H1 (cell line): ENCODE measurements at regions of chr2 and their contacts with region 1.

Region 1: GRCh38 chr2:121076885-121077549 is 208.0 kb downstream of the TFCP2L1 start:
- DNase-seq: peak in 1 of 2 experiments; percentile 99
- H3K4me3 ChIP-seq: peak overlapping the region in 3 of 4 experiments; percentile 28 to 54 (median 36); a peak in 6 of 8 replicates
- H3K27ac ChIP-seq: no peak overlapping the region
- H3K4me1 ChIP-seq: peaks cover 0 to 19% (median 13%) of the 10 kb centered on the region in 4 experiments; a peak in 6 of 7 replicates
- H3K27me3 ChIP-seq: peaks cover 0 to 32% (median 20%) of the 10 kb centered on the region in 4 experiments; a peak in 6 of 7 replicates
- CTCF ChIP-seq: peak in 2 of 3 experiments; percentile 94 to 99; a peak in 3 of 4 replicates
- EP300 ChIP-seq: no peak
- POLR2A ChIP-seq: no peak
- RAD21 ChIP-seq: peak; percentile 52 to 61

Region 2: GRCh38 chr2:120712180-120712681 is 364.8 kb before region 1 on chr2:
- CTCF ChIA-PET with region 1: interaction called, 7 read pairs
- POLR2A ChIA-PET with region 1: interaction called, 10 read pairs
- DNase-seq: no peak
- H3K4me3 ChIP-seq: no peak overlapping the region
- H3K27ac ChIP-seq: no peak overlapping the region
- H3K4me1 ChIP-seq: peaks cover 14 to 23% (median 17%) of the 10 kb centered on the region in 4 experiments
- H3K27me3 ChIP-seq: peaks cover 0 to 19% (median 8%) of the 10 kb centered on the region in 4 experiments; a peak in 5 of 7 replicates
- CTCF ChIP-seq: no peak
- EP300 ChIP-seq: no peak
- POLR2A ChIP-seq: no peak
- RAD21 ChIP-seq: no peak

Region 3: DNA sequence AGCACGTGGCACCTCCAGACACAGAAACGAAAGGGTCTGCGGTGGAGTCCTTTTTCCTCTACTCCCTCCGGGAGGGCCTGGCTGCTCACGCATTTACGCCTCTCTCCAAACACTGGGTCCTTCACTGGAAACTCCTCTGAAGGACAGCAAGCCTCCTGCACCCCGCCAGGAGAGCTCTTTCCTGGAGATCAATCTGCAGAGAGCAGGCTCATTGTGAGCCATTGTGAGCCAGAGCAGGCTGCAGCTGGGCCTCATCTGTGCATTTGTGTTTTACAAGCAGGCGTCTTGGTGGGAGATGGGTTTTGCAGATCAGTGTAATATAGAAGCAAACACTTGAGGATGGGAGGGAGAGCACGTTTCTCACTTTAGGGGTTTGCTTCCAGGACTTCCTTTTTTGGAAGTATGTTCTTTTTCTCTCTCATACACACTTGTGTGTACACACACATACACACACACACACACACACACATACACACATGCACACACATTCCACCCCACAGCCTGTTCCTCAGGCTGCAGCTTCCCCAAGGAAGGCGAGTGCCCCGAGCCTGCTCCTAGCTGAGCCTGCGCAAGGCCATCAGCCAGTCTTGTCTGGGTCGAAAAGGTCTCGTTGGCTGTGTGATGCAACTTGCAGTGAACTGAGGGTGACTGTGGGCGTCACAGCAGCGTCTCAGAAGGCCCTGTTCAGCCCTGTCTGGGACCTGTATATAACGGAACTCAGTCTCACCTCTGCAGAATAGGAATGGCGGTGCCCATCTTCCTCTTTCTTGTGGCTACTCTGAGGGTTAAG is 177.9 kb before region 1 on chr2:
- CTCF ChIA-PET with region 1: interaction called, 4 read pairs
- POLR2A ChIA-PET with region 1: interaction called, 11 read pairs
- DNase-seq: no peak
- H3K4me3 ChIP-seq: no peak overlapping the region
- H3K27ac ChIP-seq: no peak overlapping the region; the same call in 1 of the 2 replicates
- H3K4me1 ChIP-seq: peaks cover 18 to 44% (median 28%) of the 10 kb centered on the region in 4 experiments
- H3K27me3 ChIP-seq: no peaks in the 10 kb centered on the region; a peak in 1 of 7 replicates
- CTCF ChIP-seq: no peak
- EP300 ChIP-seq: no peak
- POLR2A ChIP-seq: no peak
- RAD21 ChIP-seq: no peak

Region 4: DNA sequence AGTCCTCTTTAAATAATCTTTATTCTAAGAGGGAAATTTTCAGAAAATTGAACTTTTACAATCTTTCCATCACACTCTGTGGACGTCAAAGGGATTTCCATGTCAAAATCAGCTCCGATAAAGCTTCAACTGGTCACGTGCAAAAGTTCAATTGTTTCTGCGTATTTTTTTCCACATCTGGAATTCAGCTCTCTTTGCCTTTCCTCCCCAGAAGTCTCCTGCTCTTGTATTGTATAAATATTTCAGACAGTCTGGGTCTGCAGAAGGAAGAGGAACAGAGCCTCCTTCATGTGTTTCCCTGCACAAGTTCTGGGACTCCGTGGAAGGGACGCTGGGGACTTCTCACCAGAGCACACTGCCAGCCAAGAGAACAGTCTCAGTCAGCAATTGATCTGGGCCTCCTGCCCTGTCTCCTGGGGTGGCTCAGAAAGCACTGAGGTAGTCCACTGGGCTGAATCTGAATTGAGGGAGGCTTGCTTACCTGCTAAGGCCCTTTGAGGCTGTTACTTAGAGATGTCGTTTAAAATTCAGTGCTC is 43.5 kb before region 1 on chr2:
- CTCF ChIA-PET with region 1: interaction called, 4 read pairs
- POLR2A ChIA-PET with region 1: interaction called, 13 read pairs
- DNase-seq: no peak
- H3K4me3 ChIP-seq: no peak overlapping the region
- H3K27ac ChIP-seq: no peak overlapping the region
- H3K4me1 ChIP-seq: no peaks in the 10 kb centered on the region
- H3K27me3 ChIP-seq: peaks cover 0 to 28% (median 15%) of the 10 kb centered on the region in 4 experiments; a peak in 6 of 7 replicates
- CTCF ChIP-seq: no peak
- EP300 ChIP-seq: no peak
- POLR2A ChIP-seq: no peak
- RAD21 ChIP-seq: no peak

Region 5: DNA sequence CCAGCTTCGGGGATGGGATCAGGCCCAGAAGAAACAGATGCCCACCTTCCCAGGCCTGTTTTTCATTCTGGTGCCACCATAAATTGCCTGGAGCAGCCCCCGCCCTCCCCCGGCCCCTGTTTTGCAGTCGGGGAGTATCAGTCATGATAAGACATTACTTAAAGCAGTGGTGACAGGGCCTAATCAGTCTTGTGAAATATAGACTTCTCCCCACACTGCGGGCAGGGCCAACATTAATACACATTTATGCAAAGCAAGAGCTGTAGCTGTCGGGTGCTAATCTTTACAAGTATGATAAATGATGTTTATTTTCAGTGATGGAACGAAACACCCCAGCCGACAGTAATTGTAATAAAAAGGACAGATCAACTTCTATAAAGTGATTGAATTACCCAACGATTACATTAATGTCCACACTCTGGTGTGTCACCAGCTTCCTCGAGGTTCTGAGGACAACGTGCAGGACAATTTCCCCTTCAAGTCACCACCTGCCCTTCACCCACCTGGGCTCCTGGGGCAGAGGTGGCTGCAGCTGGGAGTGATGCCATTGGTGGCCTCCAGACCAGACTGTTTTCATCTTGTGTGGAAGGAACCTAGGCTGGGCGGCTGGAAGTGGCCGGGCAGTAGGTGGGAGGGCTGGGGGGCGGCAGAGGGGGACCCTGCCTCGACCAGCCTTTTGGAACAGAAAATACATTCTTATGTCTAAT is 18.0 kb before region 1 on chr2:
- CTCF ChIA-PET with region 1: interaction called, 10 read pairs
- POLR2A ChIA-PET with region 1: interaction called, 35 read pairs
- DNase-seq: no peak
- H3K4me3 ChIP-seq: no peak overlapping the region
- H3K27ac ChIP-seq: no peak overlapping the region
- H3K4me1 ChIP-seq: peaks cover 0 to 15% (median 4%) of the 10 kb centered on the region in 4 experiments; a peak in 6 of 7 replicates
- H3K27me3 ChIP-seq: peaks cover 0 to 17% (median 5%) of the 10 kb centered on the region in 4 experiments; a peak in 3 of 7 replicates
- CTCF ChIP-seq: no peak
- EP300 ChIP-seq: no peak
- POLR2A ChIP-seq: no peak
- RAD21 ChIP-seq: no peak

Region 6: DNA sequence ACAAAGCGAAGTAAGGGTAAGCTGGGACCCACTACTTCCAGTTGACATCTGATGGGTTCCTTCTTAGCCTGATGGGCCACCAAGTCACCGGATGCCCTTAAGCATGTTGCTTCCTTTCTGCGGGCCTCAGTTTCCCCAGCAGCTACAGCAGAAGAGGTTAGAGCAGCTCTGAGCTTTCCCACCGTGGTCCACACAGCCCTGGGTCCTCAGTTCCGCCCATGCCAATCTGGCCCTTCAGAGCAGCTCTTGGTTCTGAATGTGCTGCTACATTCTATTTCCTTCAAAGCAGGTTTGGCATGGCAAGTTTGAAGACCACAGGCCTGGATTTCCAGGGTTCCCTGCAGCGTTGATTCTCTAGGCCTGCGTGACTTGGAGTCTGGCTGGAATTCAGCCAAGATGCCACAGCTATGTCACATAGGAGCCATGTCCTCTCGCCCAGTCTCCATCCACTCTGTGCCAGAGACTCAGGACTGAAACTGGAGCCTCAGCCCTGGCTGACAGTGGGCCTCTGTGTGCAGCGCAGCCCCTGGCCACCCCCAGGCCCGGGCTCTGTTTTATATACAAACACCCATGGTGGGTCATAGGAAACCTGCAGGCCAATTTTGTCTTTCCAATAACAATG is 128.4 kb after region 1 on chr2:
- CTCF ChIA-PET with region 1: no interaction called
- POLR2A ChIA-PET with region 1: no interaction called
- DNase-seq: no peak
- H3K4me3 ChIP-seq: no peak overlapping the region
- H3K27ac ChIP-seq: no peak overlapping the region
- H3K4me1 ChIP-seq: no peaks in the 10 kb centered on the region
- H3K27me3 ChIP-seq: no peaks in the 10 kb centered on the region; a peak in 1 of 7 replicates
- CTCF ChIP-seq: no peak
- EP300 ChIP-seq: no peak
- POLR2A ChIP-seq: no peak
- RAD21 ChIP-seq: no peak

Region 7: DNA sequence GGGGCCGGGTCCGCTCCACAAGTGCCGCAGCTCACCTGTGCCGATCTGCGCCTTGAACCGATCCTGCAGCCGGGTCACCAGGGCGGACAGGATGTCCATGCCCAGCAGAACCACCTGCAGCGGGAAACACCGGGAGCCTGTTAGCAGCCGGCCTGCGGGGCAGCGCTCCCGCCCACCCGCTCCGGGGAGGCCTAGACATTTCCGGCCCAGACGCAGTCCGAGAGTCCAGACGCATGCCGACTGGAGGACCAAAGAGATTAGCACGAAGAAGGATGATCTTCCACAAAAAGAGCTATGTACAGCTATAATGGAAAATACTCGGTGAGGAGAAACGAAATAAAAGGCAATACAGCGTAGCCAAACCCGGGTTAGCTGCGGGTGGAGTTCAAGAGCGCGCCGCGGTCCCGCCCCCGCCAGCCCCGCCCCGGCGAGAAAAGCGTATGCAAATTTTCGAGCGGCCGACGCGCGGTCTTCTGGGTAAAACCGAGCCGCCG is 453.2 kb after region 1 on chr2:
- CTCF ChIA-PET with region 1: interaction called, 5 read pairs
- POLR2A ChIA-PET with region 1: interaction called, 15 read pairs
- DNase-seq: peak; percentile 47 to 88
- H3K4me3 ChIP-seq: peak overlapping the region; percentile 86 to 95 (median 92)
- H3K27ac ChIP-seq: peak overlapping the region; percentile 99
- H3K4me1 ChIP-seq: peaks cover 0 to 11% (median 5%) of the 10 kb centered on the region in 4 experiments; a peak in 3 of 7 replicates
- H3K27me3 ChIP-seq: no peaks in the 10 kb centered on the region
- CTCF ChIP-seq: no peak
- EP300 ChIP-seq: no peak
- POLR2A ChIP-seq: no peak
- RAD21 ChIP-seq: no peak

Region 8: DNA sequence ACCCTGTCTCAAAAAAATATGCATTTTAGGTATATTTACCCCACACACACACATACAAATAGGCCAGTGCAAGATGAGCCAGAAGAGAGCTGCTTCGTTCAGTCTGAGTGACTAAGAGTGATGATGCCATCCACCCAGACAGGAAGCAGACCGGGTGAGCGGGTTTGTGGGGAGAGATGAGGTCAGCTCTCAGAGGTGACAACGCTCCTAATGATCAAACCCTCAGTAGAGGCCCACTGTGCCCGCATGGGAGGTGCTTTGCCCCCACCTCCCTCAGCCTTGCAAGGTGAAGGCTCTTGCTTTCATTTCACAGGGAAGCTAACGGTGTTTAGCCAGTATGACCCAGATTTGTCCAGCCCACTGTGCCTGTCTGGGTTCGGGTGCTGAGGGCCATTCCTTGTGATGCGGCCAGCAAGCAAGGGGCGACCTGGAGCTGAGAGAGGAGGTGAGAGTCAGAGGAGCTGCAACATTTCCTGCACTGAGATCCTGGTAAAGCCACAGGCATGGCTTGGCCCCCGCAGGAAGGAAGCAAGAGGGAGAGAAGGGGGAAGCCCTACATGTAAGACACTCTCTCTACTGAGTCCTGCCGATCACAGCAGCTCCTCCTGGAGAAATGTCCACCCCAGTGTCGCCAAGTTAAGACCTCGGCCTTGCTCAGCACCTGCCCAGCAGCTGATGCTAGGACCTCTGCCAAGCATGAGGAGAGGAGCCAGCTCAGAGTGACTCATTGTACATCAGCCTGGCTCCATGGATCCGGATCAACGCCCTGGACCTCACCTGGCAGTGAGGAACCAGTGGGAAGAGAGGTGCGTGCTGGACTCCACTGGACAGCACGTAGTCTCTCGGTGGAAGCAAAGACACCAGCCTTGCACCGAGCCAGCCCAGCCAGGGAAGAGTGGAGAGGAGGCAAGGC is 622.7 kb after region 1 on chr2:
- CTCF ChIA-PET with region 1: no interaction called
- POLR2A ChIA-PET with region 1: no interaction called
- DNase-seq: no peak
- H3K4me3 ChIP-seq: no peak overlapping the region
- H3K27ac ChIP-seq: no peak overlapping the region
- H3K4me1 ChIP-seq: peaks cover 0 to 10% (median 6%) of the 10 kb centered on the region in 4 experiments; a peak in 3 of 7 replicates
- H3K27me3 ChIP-seq: no peaks in the 10 kb centered on the region
- CTCF ChIP-seq: no peak
- EP300 ChIP-seq: no peak
- POLR2A ChIP-seq: no peak
- RAD21 ChIP-seq: no peak